WTC11 (cell line): ENCODE measurements at regions of chr5 and their contacts with region 1.

Region 1: GRCh38 chr5:10987930-10988504 is 227.0 kb upstream of the DAP start:
- DNase-seq: peak; percentile 94
- ATAC-seq: peak; percentile 97
- H3K4me3 Mint-ChIP-seq: peak overlapping the region; percentile 49
- H3K27ac Mint-ChIP-seq: no peak overlapping the region
- H3K4me1 Mint-ChIP-seq: peaks cover 27% of the 10 kb centered on the region
- H3K27me3 Mint-ChIP-seq: no peaks in the 10 kb centered on the region
- CTCF ChIP-seq: peak; percentile 88

Region 2: GRCh38 chr5:10913846-10914245 is 74.2 kb before region 1 on chr5:
- CTCF ChIA-PET with region 1: no interaction called
- POLR2A ChIA-PET with region 1: no interaction called
- DNase-seq: no peak
- ATAC-seq: no peak
- H3K4me3 Mint-ChIP-seq: no peak overlapping the region
- H3K27ac Mint-ChIP-seq: no peak overlapping the region
- H3K4me1 Mint-ChIP-seq: peaks cover 4% of the 10 kb centered on the region
- H3K27me3 Mint-ChIP-seq: no peaks in the 10 kb centered on the region; the same call in 1 of the 2 replicates
- CTCF ChIP-seq: no peak

Region 3: GRCh38 chr5:10954687-10955178 is 33.3 kb before region 1 on chr5:
- CTCF ChIA-PET with region 1: no interaction called
- POLR2A ChIA-PET with region 1: no interaction called
- DNase-seq: no peak
- ATAC-seq: no peak
- H3K4me3 Mint-ChIP-seq: no peak overlapping the region
- H3K27ac Mint-ChIP-seq: no peak overlapping the region
- H3K4me1 Mint-ChIP-seq: 0 out of 2 replicates have a peak, but pooled peaks cover 4% of the 10 kb centered on the region
- H3K27me3 Mint-ChIP-seq: no peaks in the 10 kb centered on the region
- CTCF ChIP-seq: no peak

Region 4: DNA sequence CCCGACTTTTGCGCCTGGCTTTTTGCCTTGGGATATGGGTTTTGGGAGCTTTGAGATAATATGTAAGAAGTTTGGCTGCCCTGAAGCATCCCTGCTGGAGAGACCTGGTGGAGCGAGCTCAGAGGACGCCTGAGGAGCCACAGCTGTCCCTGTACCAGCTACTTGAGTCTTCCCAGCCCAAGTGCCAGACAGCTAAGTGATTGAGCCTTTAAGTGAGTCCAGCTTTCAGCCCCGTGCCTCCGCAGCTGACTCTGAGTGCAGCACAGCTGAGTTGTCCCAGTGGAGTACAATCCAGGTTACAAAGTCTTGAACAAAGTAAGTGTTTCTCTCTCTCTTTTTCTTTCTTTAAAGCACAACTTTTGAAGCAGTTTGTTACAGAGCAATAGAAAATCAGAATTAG is 23.2 kb before region 1 on chr5:
- CTCF ChIA-PET with region 1: interaction called, 11 read pairs
- POLR2A ChIA-PET with region 1: no interaction called
- DNase-seq: no peak
- ATAC-seq: no peak
- H3K4me3 Mint-ChIP-seq: no peak overlapping the region
- H3K27ac Mint-ChIP-seq: no peak overlapping the region
- H3K4me1 Mint-ChIP-seq: peaks cover 12% of the 10 kb centered on the region
- H3K27me3 Mint-ChIP-seq: no peaks in the 10 kb centered on the region; the same call in 1 of the 2 replicates
- CTCF ChIP-seq: no peak

Region 5: DNA sequence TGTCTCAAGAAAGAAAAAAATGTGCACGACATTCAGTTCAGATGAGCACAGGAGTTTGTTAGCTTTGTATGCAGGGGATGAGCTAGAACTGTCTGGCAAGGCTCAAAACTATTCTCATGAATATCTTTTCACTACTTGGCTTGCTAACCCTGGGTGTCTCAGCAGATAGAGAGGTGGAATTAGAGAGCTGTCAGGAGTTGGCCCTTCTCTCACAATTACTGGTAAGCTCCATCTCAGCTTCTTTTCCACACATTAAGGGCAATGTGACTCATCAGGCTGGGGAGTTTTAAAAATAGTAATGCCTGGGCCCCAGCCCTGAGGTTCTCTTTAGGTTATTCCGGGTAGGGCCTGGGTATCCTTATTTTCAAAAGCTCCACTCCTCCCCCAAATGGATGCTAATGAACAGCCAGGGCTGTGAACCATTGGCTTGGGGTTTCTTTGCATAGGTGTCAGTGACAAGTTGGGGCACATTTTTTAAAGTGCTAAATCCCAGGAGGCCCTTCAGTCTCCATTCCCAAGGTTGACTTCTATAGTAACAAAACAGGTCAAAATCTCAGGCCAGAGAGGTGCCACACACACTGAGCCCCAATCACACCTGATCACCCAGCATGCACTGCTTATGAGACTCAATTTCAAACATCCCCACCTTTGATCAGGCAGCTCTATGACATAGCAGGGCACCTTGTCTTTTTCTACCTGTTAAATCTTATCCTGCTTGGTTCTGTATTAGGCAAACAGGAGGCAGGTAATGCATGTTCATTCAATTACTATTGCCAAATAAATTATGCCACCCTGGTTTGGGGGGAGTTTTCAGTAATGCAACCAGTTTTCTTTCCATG is 12.7 kb after region 1 on chr5:
- CTCF ChIA-PET with region 1: interaction called, 31 read pairs
- POLR2A ChIA-PET with region 1: no interaction called
- DNase-seq: no peak
- ATAC-seq: peak; percentile 60
- H3K4me3 Mint-ChIP-seq: no peak overlapping the region
- H3K27ac Mint-ChIP-seq: no peak overlapping the region
- H3K4me1 Mint-ChIP-seq: peaks cover 20% of the 10 kb centered on the region
- H3K27me3 Mint-ChIP-seq: no peaks in the 10 kb centered on the region; the same call in 1 of the 2 replicates
- CTCF ChIP-seq: no peak

Region 6: GRCh38 chr5:11038772-11039171 is 50.8 kb after region 1 on chr5:
- CTCF ChIA-PET with region 1: interaction called, 12 read pairs
- POLR2A ChIA-PET with region 1: no interaction called
- DNase-seq: no peak
- ATAC-seq: no peak
- H3K4me3 Mint-ChIP-seq: no peak overlapping the region
- H3K27ac Mint-ChIP-seq: no peak overlapping the region
- H3K4me1 Mint-ChIP-seq: no peaks in the 10 kb centered on the region
- H3K27me3 Mint-ChIP-seq: no peaks in the 10 kb centered on the region
- CTCF ChIP-seq: no peak

Region 7: DNA sequence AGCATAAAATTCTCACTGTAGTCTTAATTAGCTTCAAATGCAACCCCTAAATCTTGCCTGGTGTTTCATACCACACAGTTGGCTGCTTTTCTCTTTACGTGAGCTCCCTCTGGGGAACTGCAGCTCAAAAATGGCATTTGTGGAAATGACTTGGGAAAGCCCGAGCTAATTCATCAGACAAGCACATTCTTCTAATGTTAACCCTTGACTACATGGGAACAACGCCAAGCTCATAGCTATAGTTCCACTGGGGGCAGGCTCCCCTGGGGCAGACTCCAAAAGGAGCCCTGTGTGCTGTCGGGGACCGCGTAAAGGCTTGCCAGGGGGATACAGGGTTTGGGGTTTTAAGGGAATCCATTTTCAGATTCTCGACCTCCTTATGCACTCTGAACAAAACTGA is 74.4 kb after region 1 on chr5:
- CTCF ChIA-PET with region 1: interaction called, 10 read pairs
- POLR2A ChIA-PET with region 1: no interaction called
- DNase-seq: no peak
- ATAC-seq: peak; percentile 76
- H3K4me3 Mint-ChIP-seq: no peak overlapping the region
- H3K27ac Mint-ChIP-seq: no peak overlapping the region
- H3K4me1 Mint-ChIP-seq: peaks cover 21% of the 10 kb centered on the region
- H3K27me3 Mint-ChIP-seq: no peaks in the 10 kb centered on the region
- CTCF ChIP-seq: no peak

Region 8: DNA sequence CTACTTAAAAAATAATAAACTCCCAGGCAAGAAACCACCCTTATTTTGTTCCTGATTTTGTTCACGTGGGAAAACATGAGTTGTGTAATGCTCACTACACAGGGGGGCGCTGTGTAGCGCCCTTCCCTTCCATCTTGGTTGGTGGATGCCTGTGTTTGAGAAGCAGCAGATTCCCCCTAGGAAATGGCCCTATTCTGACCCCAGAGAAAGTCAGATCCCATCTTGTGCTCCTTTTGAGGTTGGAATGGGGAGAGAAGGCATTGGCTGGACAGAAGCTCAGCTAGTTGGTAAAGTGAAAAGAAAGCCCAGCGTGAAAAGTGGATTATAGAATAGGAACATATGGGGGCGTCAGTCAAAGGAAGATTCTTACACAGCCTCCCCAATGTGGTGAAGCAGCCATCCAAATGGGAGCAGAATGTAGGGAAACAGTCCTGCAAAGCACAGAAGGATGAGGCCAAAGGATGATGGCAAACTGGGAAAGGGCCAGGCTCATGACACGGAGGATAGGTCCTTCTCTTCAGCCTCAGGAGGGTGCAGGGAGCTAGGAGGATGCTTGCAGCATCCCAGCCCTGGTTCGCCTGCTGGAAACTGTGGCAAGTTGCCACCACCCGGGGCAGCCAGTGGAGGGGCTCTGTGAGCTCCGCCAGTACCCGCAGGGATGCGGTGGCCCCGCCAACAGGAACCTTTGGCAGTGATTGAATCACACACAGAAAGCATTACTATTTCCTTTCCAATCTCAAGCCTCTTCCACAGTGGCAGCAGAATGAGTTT is 87.2 kb after region 1 on chr5:
- CTCF ChIA-PET with region 1: no interaction called
- POLR2A ChIA-PET with region 1: no interaction called
- DNase-seq: peak; percentile 39
- ATAC-seq: peak; percentile 84
- H3K4me3 Mint-ChIP-seq: no peak overlapping the region
- H3K27ac Mint-ChIP-seq: no peak overlapping the region
- H3K4me1 Mint-ChIP-seq: 0 out of 2 replicates have a peak, but pooled peaks cover 3% of the 10 kb centered on the region
- H3K27me3 Mint-ChIP-seq: no peaks in the 10 kb centered on the region; the same call in 1 of the 2 replicates
- CTCF ChIP-seq: peak; percentile 52; the same call in 1 of the 2 replicates